Mammary epithelial cell (primary cell): ENCODE measurements at regions of chr18 and their contacts with region 1.

Region 1: DNA sequence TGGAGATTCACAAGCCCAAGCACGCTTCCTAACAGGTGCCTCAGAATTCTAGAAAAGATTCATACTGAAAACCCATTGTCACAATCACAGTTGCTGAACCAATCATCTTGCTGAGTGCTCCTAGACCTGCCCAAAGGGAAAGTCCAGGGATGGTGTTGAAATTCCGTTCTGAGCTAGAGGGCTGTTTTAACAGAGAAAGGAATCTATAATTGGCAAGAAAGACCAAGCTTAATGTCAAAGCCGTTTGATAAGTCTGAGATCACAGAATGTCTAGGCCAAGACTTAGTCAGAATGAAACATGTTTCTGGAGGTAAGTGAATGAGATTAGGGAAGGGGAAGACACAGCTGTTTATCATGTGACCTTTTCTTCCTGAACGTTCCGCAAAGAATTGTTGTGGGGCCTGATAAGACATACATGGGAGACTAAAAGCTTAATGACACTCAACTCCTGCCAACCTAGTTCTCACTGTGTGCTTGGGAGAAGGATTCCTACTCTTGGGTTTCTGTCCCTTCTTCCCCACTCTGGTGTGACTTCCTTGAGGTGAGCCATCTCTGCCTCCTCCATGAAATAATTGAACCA is 27.5 kb downstream of the PMAIP1 start:
- DNase-seq: peak; percentile 97
- H3K4me3 ChIP-seq: no peak overlapping the region
- H3K27ac ChIP-seq: peak overlapping the region; percentile 5
- H3K4me1 ChIP-seq: peaks cover 29% of the 10 kb centered on the region
- H3K27me3 ChIP-seq: no peaks in the 10 kb centered on the region
- CTCF ChIP-seq: no peak

Region 2: DNA sequence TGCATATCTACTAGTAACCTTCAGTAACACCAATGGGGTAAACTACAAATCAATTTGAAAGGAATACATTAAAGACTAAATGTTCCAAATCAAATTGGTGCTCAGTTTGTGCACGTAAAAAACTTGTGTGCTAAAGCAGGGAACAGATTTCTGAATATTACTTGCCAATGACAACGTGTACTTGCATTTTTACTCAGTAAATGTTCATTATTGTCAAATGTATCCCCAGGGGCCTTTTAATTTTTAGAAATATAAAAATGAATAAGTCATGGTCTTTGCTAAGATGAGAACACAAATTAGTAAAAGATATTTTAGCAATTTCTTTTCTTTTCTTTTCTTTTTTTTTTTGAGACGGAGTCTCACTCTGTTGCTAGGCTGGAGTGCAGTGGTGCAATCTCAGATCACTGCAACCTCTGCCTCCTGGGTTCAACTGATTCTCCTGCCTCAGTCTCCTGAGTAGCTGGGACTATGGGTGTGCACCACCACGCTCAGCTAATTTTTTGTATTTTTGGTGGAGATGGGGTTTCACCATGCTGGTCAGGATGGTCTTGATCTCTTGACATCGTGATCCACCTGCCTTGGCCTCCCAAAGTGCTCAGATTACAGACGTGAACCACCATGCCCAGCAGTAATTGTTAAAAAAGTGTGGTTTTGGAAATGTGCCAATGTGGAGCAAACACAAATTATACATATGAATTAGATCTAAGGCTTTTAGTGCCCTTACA is 25.1 kb after region 1 on chr18:
- CTCF ChIA-PET with region 1: no interaction called
- dilution Hi-C with region 1: no loop called
- in situ Hi-C with region 1: no loop called
- intact Hi-C with region 1: loop called (anchors 2 kb)
- DNase-seq: no peak
- H3K4me3 ChIP-seq: no peak overlapping the region
- H3K27ac ChIP-seq: peak overlapping the region; percentile 72
- H3K4me1 ChIP-seq: peaks cover 43% of the 10 kb centered on the region
- H3K27me3 ChIP-seq: no peaks in the 10 kb centered on the region
- CTCF ChIP-seq: no peak

Region 3: DNA sequence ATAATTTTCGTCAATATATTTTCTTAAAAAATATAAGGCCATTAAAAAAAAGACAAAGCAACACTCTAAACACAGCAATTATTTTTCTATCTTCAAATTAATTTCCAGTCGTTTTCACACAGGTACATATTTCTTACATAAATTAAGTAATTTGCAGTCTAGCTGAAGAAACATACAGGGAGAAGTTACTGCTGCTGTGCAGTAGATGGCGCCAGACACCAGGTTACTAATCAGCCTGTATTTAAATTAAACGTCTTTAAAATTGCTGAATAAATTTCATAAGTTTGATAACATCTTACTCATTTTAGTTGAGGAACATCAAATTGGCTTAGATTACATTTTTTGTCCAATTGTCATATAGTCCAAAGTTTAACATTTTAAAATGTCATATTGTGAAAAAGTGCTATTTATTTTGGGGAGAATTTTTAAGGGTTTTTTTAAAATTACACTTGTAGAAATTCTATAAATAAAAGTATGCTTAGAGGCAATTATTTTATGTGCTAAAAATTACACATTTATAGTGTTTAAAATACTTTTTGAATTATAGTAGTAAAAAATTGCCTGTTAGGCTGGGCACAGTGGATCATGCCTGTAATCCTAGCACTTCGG is 60.9 kb after region 1 on chr18:
- CTCF ChIA-PET with region 1: no interaction called
- dilution Hi-C with region 1: no loop called
- in situ Hi-C with region 1: no loop called
- intact Hi-C with region 1: no loop called
- DNase-seq: no peak
- H3K4me3 ChIP-seq: no peak overlapping the region
- H3K27ac ChIP-seq: no peak overlapping the region
- H3K4me1 ChIP-seq: peaks cover 9% of the 10 kb centered on the region
- H3K27me3 ChIP-seq: peaks cover 3% of the 10 kb centered on the region
- CTCF ChIP-seq: peak; percentile 87 to 93